ENCODE measurements at regions of chr15 and their contacts with region 1.

Region 1: GRCh38 chr15:48131324-48131723 is 10.5 kb downstream of the SLC24A5 start:
- DNase-seq: no peak
- ATAC-seq: no peak
- H3K4me3 ChIP-seq: no peak overlapping the region
- H3K27ac ChIP-seq: no peak overlapping the region
- H3K4me1 ChIP-seq: no peaks in the 10 kb centered on the region
- H3K27me3 ChIP-seq: no peaks in the 10 kb centered on the region
- CTCF ChIP-seq: no peak

Region 2: DNA sequence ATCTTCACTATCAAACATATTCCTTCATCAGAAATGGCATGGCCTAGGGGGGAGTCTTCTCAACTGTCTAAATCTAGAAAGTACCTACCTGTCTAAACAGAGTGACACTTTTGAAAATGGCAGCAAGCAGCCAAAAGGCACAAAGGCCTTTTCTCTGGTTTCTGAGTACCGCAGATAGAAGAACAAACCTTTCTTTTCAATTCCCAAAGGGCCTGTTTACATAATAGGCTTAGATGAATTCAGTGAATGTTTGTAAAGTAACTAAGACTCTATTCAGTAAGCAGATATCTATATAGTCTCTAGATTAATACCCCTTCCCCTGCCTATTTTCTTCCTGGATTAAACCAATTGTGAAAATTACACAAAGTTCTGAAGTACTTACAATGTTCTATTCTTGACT is 39.7 kb after region 1 on chr15:
- intact Hi-C with region 1: no loop called
- DNase-seq: no peak
- ATAC-seq: no peak
- H3K4me3 ChIP-seq: no peak overlapping the region
- H3K27ac ChIP-seq: no peak overlapping the region
- H3K4me1 ChIP-seq: no peaks in the 10 kb centered on the region
- H3K27me3 ChIP-seq: no peaks in the 10 kb centered on the region
- CTCF ChIP-seq: no peak

Region 3: DNA sequence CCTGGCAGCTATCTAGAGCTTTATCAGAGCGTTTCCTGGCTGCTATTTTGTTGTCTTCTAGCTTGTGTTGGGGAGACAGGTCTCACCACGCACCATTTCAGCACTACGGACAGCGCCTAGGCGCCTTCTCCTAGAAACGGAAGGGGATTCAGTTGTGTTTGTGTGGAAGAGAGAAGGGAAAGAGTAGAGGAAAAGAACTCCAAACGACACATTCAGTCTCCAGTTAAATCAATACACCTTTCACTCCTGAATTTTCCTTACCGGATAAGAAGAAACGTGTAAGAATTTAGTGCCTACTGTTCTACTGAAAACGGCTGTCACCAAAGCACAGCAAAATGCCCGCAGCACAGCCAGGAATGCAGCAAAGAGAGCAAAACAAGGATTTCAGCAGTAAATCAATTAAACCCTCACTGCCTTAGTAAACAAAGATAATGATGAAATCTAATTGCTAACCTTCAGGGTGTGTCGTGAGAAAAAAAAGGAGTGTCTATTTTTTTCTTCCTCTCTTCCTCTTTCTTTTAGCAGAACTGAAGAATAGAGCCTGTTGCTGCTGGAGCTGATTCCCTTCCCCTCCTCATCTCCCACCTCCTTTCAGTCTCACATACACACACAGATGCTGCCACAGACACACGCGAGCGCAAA is 59.7 kb after region 1 on chr15:
- intact Hi-C with region 1: loop called in 1 of 10 experiments (anchors 10 kb)
- DNase-seq: peak; percentile 57 to 68
- ATAC-seq: peak in 6 of 8 donors; percentile 48 to 68 (median 57)
- H3K4me3 ChIP-seq: peak overlapping the region in 2 of 10 donors; percentile 11 to 16
- H3K27ac ChIP-seq: no peak overlapping the region
- H3K4me1 ChIP-seq: peaks cover 0 to 6% (median 0%) of the 10 kb centered on the region in 9 donors
- H3K27me3 ChIP-seq: peaks cover 0 to 41% (median 18%) of the 10 kb centered on the region in 7 donors
- CTCF ChIP-seq: no peak